Caco-2 (cell line): ENCODE measurements at regions of chr10 and their contacts with region 1.

Region 1: GRCh38 chr10:69914398-69915214 is 112.9 kb downstream of the COL13A1 start:
- DNase-seq: peak; percentile 80 to 86
- H3K4me3 ChIP-seq: no peak overlapping the region
- H3K4me3 Mint-ChIP-seq: no peak overlapping the region
- H3K27ac Mint-ChIP-seq: no peak overlapping the region
- H3K4me1 ChIP-seq: no peaks in the 10 kb centered on the region
- H3K4me1 Mint-ChIP-seq: no peaks in the 10 kb centered on the region
- H3K27me3 ChIP-seq: peaks cover 5% of the 10 kb centered on the region
- H3K27me3 Mint-ChIP-seq: peaks cover 9% of the 10 kb centered on the region
- CTCF ChIP-seq: peak; percentile 99

Region 2: DNA sequence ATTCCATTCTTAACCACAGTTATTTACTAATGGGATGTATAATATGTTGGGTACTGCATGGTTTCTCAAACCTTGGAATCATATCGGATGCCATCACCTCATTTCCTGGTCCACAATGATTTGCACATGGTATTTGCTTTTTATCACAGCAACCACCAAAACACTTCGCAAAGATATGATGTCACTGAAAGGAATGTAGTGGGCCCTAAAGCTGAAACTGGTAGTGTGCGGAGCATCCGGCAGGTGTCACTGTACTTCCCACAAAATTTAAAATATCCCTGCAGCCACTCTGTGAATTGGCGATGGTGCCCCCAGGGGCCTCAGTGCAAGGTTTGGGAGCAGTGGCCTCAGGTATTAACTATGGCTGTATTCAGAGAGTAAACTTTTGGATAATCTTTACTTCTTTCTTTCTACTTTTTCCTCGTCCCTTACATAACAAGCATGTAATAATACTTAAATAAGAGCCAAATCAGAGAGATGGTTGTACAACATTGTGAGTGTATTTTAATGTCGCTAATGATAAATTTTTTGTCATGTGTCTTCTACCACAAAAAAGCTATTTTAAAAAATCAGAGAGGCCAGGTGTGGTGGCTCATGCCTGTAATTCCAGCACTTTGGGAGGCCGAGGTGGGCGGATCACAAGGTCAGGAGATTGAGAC is 218.4 kb before region 1 on chr10:
- CTCF ChIA-PET with region 1: no interaction called
- POLR2A ChIA-PET with region 1: no interaction called
- intact Hi-C with region 1: loop called (anchors 1 kb)
- DNase-seq: peak in 1 of 2 experiments; percentile 80
- H3K4me3 ChIP-seq: no peak overlapping the region
- H3K4me3 Mint-ChIP-seq: no peak overlapping the region
- H3K27ac Mint-ChIP-seq: peak overlapping the region; percentile 69
- H3K4me1 ChIP-seq: no peaks in the 10 kb centered on the region
- H3K4me1 Mint-ChIP-seq: no peaks in the 10 kb centered on the region
- H3K27me3 ChIP-seq: no peaks in the 10 kb centered on the region; the same call in 1 of the 2 replicates
- H3K27me3 Mint-ChIP-seq: peaks cover 23% of the 10 kb centered on the region
- CTCF ChIP-seq: peak; percentile 68 to 85

Region 3: GRCh38 chr10:69861251-69862240 is 53.1 kb before region 1 on chr10:
- CTCF ChIA-PET with region 1: interaction called, 13 read pairs
- POLR2A ChIA-PET with region 1: no interaction called
- intact Hi-C with region 1: loop called (anchors 1 kb)
- DNase-seq: peak; percentile 66 to 70
- H3K4me3 ChIP-seq: no peak overlapping the region
- H3K4me3 Mint-ChIP-seq: no peak overlapping the region
- H3K27ac Mint-ChIP-seq: no peak overlapping the region
- H3K4me1 ChIP-seq: no peaks in the 10 kb centered on the region
- H3K4me1 Mint-ChIP-seq: no peaks in the 10 kb centered on the region
- H3K27me3 ChIP-seq: no peaks in the 10 kb centered on the region; the same call in 1 of the 2 replicates
- H3K27me3 Mint-ChIP-seq: peaks cover 15% of the 10 kb centered on the region
- CTCF ChIP-seq: peak; percentile 38 to 70

Region 4: GRCh38 chr10:69901628-69902505 is 12.7 kb before region 1 on chr10:
- CTCF ChIA-PET with region 1: interaction called, 90 read pairs
- POLR2A ChIA-PET with region 1: no interaction called
- intact Hi-C with region 1: loop called (anchors 1 kb)
- DNase-seq: peak; percentile 85 to 88
- H3K4me3 ChIP-seq: no peak overlapping the region
- H3K4me3 Mint-ChIP-seq: no peak overlapping the region
- H3K27ac Mint-ChIP-seq: no peak overlapping the region
- H3K4me1 ChIP-seq: peaks cover 37% of the 10 kb centered on the region
- H3K4me1 Mint-ChIP-seq: peaks cover 29% of the 10 kb centered on the region
- H3K27me3 ChIP-seq: no peaks in the 10 kb centered on the region
- H3K27me3 Mint-ChIP-seq: no peaks in the 10 kb centered on the region
- CTCF ChIP-seq: peak; percentile 91 to 94

Region 5: GRCh38 chr10:69957886-69958555 is 43.4 kb after region 1 on chr10:
- CTCF ChIA-PET with region 1: interaction called, 13 read pairs
- POLR2A ChIA-PET with region 1: no interaction called
- intact Hi-C with region 1: no loop called
- DNase-seq: peak; percentile 49 to 74
- H3K4me3 ChIP-seq: no peak overlapping the region
- H3K4me3 Mint-ChIP-seq: no peak overlapping the region
- H3K27ac Mint-ChIP-seq: no peak overlapping the region
- H3K4me1 ChIP-seq: no peaks in the 10 kb centered on the region
- H3K4me1 Mint-ChIP-seq: no peaks in the 10 kb centered on the region
- H3K27me3 ChIP-seq: peaks cover 3% of the 10 kb centered on the region
- H3K27me3 Mint-ChIP-seq: peaks cover 32% of the 10 kb centered on the region
- CTCF ChIP-seq: peak; percentile 93 to 97

Region 6: GRCh38 chr10:70074165-70074564 is 159.6 kb after region 1 on chr10:
- CTCF ChIA-PET with region 1: no interaction called
- POLR2A ChIA-PET with region 1: no interaction called
- intact Hi-C with region 1: no loop called
- DNase-seq: no peak
- H3K4me3 ChIP-seq: no peak overlapping the region
- H3K4me3 Mint-ChIP-seq: no peak overlapping the region
- H3K27ac Mint-ChIP-seq: no peak overlapping the region
- H3K4me1 ChIP-seq: no peaks in the 10 kb centered on the region
- H3K4me1 Mint-ChIP-seq: no peaks in the 10 kb centered on the region
- H3K27me3 ChIP-seq: no peaks in the 10 kb centered on the region; the same call in none of the 2 replicates
- H3K27me3 Mint-ChIP-seq: peaks cover 20% of the 10 kb centered on the region
- CTCF ChIP-seq: no peak

Region 7: GRCh38 chr10:70255329-70256299 is 341.0 kb after region 1 on chr10:
- CTCF ChIA-PET with region 1: no interaction called
- POLR2A ChIA-PET with region 1: no interaction called
- intact Hi-C with region 1: no loop called
- DNase-seq: peak in 1 of 2 experiments; percentile 68
- H3K4me3 ChIP-seq: no peak overlapping the region
- H3K4me3 Mint-ChIP-seq: no peak overlapping the region
- H3K27ac Mint-ChIP-seq: no peak overlapping the region
- H3K4me1 ChIP-seq: peaks cover 24% of the 10 kb centered on the region
- H3K4me1 Mint-ChIP-seq: peaks cover 16% of the 10 kb centered on the region
- H3K27me3 ChIP-seq: no peaks in the 10 kb centered on the region
- H3K27me3 Mint-ChIP-seq: no peaks in the 10 kb centered on the region
- CTCF ChIP-seq: no peak

Region 8: DNA sequence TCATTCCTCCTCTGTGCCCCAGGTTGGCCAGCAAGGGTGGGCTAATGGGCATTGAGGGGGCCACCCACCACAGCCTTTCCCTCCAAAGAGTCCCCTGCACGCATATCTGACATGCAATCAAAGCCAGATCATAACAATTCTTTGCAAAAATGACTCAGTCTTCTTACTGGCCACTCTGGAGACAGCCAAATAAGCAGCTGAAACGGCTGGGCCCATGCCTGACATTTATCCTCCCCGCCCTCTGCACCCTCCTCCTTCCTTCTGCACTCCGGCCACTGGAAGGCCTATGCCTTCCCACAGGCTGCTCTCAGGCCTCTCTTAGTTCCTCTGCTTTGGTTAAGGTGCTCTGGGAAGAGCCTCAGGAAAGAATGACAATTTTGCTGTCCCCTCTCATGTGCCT is 398.4 kb after region 1 on chr10:
- CTCF ChIA-PET with region 1: no interaction called
- POLR2A ChIA-PET with region 1: no interaction called
- intact Hi-C with region 1: no loop called
- DNase-seq: no peak
- H3K4me3 ChIP-seq: no peak overlapping the region
- H3K4me3 Mint-ChIP-seq: no peak overlapping the region
- H3K27ac Mint-ChIP-seq: peak overlapping the region; percentile 47
- H3K4me1 ChIP-seq: no peaks in the 10 kb centered on the region
- H3K4me1 Mint-ChIP-seq: no peaks in the 10 kb centered on the region
- H3K27me3 ChIP-seq: no peaks in the 10 kb centered on the region
- H3K27me3 Mint-ChIP-seq: no peaks in the 10 kb centered on the region
- CTCF ChIP-seq: no peak